ENCODE measurements at regions of chr13 and their contacts with region 1.

Region 1: GRCh38 chr13:48303359-48304142 is at the start of gene RB1:
- DNase-seq: peak; percentile 90
- ATAC-seq: peak; percentile 71
- H3K4me3 Mint-ChIP-seq: peak within 1 kb of the TSS; percentile 99
- H3K27ac Mint-ChIP-seq: peak within 1 kb of the TSS; percentile 100
- H3K4me1 Mint-ChIP-seq: peaks cover 39% of the 10 kb centered on the region
- H3K27me3 Mint-ChIP-seq: no peaks in the 10 kb centered on the region
- CTCF ChIP-seq: no peak
- total RNA-seq, gene RB1: 61.1 and 70.5 TPM in 2 replicates

Region 2: DNA sequence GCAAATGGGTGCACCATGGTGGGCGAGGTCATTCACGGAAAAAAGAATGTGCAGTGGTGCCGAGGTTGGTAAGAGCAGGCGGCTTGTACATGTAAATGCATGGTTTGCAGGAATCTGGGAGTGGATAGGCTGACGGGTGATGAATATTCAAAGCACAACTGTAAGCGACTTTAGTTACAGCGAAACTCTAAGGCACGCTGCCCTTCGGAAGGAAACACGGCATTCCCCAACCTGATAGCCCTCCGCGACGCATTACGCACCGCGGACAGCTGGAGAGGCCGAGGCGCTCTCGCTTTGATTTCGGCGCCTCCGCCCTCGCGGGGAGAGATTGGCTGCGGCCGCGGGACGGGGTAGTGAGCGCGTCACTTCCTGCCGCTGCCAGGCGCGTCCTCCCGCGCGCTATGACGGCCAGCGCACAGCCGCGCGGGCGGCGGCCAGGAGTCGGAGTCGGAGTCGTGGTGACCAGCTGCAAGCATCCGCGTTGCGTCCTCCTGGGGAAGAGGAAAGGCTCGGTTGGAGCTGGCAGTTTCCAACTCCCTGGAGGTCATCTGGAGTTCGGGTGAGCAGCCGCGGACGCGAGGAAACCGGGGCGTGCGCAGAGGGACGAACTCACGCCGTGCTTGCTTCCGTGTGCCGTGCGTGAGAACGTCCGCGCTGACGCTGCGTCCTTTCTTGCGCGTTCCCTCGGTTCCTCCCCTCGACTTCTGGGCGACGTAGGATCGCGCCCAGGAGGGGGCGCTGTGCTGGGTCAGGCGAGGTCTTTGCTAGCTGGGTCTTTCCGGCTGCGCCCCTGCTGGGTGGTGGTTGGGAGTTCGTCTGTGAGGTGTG is 266.0 kb before region 1 on chr13 and contains the start of gene NUDT15:
- CTCF ChIA-PET with region 1: no interaction called
- POLR2A ChIA-PET with region 1: interaction called, 12 read pairs
- intact Hi-C with region 1: loop called (anchors 1 kb)
- DNase-seq: peak; percentile 92
- ATAC-seq: peak; percentile 94
- H3K4me3 Mint-ChIP-seq: peak within 1 kb of the TSS; percentile 93
- H3K27ac Mint-ChIP-seq: peak within 1 kb of the TSS; percentile 96
- H3K4me1 Mint-ChIP-seq: peaks cover 29% of the 10 kb centered on the region
- H3K27me3 Mint-ChIP-seq: no peaks in the 10 kb centered on the region
- CTCF ChIP-seq: peak; percentile 83
- total RNA-seq, gene NUDT15: 5.5 and 6.2 TPM in 2 replicates

Region 3: GRCh38 chr13:48194379-48194754 is 109.2 kb before region 1 on chr13:
- CTCF ChIA-PET with region 1: no interaction called
- POLR2A ChIA-PET with region 1: interaction called, 9 read pairs
- intact Hi-C with region 1: loop called (anchors 1 kb)
- DNase-seq: no peak
- ATAC-seq: peak; percentile 98
- H3K4me3 Mint-ChIP-seq: peak overlapping the region; percentile 60
- H3K27ac Mint-ChIP-seq: peak overlapping the region; percentile 82
- H3K4me1 Mint-ChIP-seq: peaks cover 26% of the 10 kb centered on the region
- H3K27me3 Mint-ChIP-seq: peaks cover 4% of the 10 kb centered on the region
- CTCF ChIP-seq: no peak

Region 4: DNA sequence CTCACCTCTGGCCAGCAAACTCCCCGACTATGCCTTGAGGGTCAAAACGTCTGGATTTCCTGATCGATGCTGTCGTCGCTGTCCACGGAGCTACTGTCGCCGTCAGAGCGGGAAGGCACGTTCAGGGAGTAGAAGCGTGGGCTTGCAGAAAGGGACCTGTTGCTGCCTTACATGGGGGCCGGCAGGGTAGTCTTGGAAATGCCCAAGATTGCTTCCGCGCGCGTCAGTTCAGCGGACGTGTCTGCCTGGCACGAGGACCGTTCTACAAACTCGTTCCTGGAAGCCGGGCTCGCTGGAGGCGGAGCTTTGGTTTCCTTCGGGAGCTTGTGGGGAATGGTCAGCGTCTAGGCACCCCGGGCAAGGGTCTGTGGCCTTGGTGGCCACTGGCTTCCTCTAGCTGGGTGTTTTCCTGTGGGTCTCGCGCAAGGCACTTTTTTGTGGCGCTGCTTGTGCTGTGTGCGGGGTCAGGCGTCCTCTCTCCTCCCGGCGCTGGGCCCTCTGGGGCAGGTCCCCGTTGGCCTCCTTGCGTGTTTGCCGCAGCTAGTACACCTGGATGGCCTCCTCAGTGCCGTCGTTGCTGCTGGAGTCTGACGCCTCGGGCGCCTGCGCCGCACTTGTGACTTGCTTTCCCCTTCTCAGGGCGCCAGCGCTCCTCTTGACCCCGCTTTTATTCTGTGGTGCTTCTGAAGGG is 15.4 kb after region 1 on chr13:
- CTCF ChIA-PET with region 1: no interaction called
- POLR2A ChIA-PET with region 1: interaction called, 55 read pairs
- intact Hi-C with region 1: loop called (anchors 1 kb)
- DNase-seq: no peak
- ATAC-seq: peak; percentile 29
- H3K4me3 Mint-ChIP-seq: peak overlapping the region; percentile 81
- H3K27ac Mint-ChIP-seq: no peak overlapping the region
- H3K4me1 Mint-ChIP-seq: peaks cover 48% of the 10 kb centered on the region
- H3K27me3 Mint-ChIP-seq: no peaks in the 10 kb centered on the region
- CTCF ChIP-seq: no peak

Region 5: DNA sequence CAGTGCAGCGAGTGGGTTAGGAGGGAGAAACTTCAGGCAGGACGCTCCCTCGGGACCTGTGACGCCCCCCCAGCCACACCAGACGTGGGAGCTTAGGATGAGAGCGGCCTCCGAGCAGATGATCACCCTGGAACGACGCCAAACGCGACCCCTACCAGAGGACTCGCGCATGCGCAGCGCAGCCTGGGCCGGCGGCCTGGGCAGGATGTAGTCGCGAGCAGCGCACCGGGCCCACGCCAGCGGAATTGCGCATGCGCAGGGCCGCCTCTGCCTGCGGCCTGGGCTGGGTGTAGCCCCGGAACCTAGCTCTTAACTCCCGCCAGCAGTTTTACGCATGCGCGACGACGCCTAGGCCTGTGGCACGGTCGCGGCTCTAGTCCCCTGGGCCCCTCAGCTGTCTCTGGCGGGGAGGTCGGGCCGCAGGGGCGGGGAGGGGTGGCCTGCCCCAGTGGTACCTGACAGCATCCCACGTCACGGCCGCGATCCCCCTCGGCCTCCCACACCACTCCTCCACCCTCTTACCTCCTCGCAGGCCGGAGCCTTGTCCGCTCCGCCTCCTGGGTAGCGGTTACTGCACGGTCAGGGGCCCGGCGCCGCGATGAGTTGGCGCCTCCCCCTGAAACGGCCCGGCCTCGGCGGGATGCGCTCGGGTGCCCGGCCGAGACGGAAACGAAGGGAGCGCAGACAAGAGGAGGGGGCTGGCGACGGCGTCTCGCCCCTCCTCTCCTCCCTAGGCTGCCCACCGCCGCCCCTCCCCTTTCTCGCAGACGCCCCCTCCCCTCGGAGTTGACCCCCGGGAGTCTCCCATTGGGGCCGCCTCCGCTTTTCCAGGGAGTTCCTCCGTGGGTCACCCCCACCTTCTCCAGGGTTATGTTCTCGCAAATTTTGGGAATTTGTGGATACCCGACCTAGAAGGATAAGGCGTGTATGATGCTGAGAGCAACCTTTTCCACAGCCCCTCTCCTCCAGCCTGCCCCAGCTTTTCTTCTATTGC is 229.3 kb after region 1 on chr13 and contains the start of gene RCBTB2:
- CTCF ChIA-PET with region 1: no interaction called
- POLR2A ChIA-PET with region 1: no interaction called
- intact Hi-C with region 1: loop called (anchors 2 kb)
- DNase-seq: peak; percentile 98
- ATAC-seq: peak; percentile 94
- H3K4me3 Mint-ChIP-seq: peak within 1 kb of the TSS; percentile 95
- H3K27ac Mint-ChIP-seq: peak within 1 kb of the TSS; percentile 94
- H3K4me1 Mint-ChIP-seq: peaks cover 20% of the 10 kb centered on the region
- H3K27me3 Mint-ChIP-seq: peaks cover 12% of the 10 kb centered on the region
- CTCF ChIP-seq: no peak
- total RNA-seq, gene RCBTB2: 2.3 and 2.4 TPM in 2 replicates

Region 6: GRCh38 chr13:49443704-49444523 is 1140.4 kb after region 1 on chr13 and contains the starts of genes CAB39L and SETDB2:
- CTCF ChIA-PET with region 1: no interaction called
- POLR2A ChIA-PET with region 1: no interaction called
- intact Hi-C with region 1: loop called (anchors 5 kb)
- DNase-seq: peak; percentile 94
- ATAC-seq: peak; percentile 91
- H3K4me3 Mint-ChIP-seq: peak within 1 kb of the TSS; percentile 94
- H3K27ac Mint-ChIP-seq: peak within 1 kb of the TSS; percentile 99
- H3K4me1 Mint-ChIP-seq: peaks cover 72% of the 10 kb centered on the region
- H3K27me3 Mint-ChIP-seq: no peaks in the 10 kb centered on the region
- CTCF ChIP-seq: no peak
- total RNA-seq, gene CAB39L: 3.4 and 4.0 TPM in 2 replicates
- total RNA-seq, gene SETDB2: 23.6 and 25.1 TPM in 2 replicates

Measured in activated B cell treated with CpG ODN at 0.5 μM for 24 hours (primary cell).